BJ (cell line): ENCODE measurements at regions of chr9 and their contacts with region 1.

Region 1: GRCh38 chr9:36328798-36329411 is 70.7 kb upstream of the GNE start:
- DNase-seq: peak; percentile 12
- H3K4me3 ChIP-seq: no peak overlapping the region
- H3K27me3 ChIP-seq: no peaks in the 10 kb centered on the region
- CTCF ChIP-seq: peak; percentile 73

Region 2: DNA sequence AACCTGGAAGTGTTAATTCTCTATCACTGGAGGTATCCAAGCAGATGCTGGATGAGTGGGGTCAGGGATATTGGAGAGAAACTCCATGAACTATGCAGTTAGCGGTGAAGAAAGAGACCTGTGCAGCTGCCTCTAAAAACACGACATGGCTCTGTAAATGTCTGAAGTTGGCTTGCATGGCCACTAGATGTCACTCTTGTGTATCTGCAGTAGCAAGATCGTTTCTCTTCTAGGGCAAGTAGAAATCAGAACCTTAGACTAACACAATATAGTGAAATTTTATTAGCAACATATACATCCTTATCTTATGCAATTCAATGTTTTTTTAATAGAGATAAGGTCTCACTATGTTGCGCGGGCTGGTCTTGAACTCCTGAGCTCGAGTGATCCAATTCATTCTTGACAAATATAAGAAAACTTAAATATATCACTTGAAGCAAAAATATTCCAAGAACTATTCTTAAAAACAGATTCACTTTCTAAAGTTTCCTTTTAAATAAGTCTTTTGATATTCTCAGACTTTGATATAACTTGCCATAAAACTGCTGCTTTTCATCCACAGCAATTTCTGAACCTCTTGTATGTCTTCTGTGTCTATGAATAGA is 373.9 kb before region 1 on chr9:
- CTCF ChIA-PET with region 1: interaction called, 8 read pairs
- POLR2A ChIA-PET with region 1: interaction called, 14 read pairs
- DNase-seq: no peak
- H3K4me3 ChIP-seq: no peak overlapping the region
- H3K27me3 ChIP-seq: no peaks in the 10 kb centered on the region
- CTCF ChIP-seq: peak; percentile 88

Region 3: GRCh38 chr9:36190388-36191287 is 138.3 kb before region 1 on chr9 and contains the start of gene CLTA:
- CTCF ChIA-PET with region 1: interaction called, 20 read pairs
- POLR2A ChIA-PET with region 1: no interaction called
- DNase-seq: peak; percentile 94
- H3K4me3 ChIP-seq: peak within 1 kb of the TSS; percentile 76
- H3K27me3 ChIP-seq: no peaks in the 10 kb centered on the region
- CTCF ChIP-seq: peak; percentile 66
- polyA plus RNA-seq, gene CLTA: 197 and 212 TPM in 2 replicates

Region 4: GRCh38 chr9:36250079-36250478 is 78.8 kb before region 1 on chr9:
- CTCF ChIA-PET with region 1: interaction called, 94 read pairs
- POLR2A ChIA-PET with region 1: interaction called, 3 read pairs
- DNase-seq: no peak
- H3K4me3 ChIP-seq: no peak overlapping the region
- H3K27me3 ChIP-seq: no peaks in the 10 kb centered on the region
- CTCF ChIP-seq: no peak

Region 5: DNA sequence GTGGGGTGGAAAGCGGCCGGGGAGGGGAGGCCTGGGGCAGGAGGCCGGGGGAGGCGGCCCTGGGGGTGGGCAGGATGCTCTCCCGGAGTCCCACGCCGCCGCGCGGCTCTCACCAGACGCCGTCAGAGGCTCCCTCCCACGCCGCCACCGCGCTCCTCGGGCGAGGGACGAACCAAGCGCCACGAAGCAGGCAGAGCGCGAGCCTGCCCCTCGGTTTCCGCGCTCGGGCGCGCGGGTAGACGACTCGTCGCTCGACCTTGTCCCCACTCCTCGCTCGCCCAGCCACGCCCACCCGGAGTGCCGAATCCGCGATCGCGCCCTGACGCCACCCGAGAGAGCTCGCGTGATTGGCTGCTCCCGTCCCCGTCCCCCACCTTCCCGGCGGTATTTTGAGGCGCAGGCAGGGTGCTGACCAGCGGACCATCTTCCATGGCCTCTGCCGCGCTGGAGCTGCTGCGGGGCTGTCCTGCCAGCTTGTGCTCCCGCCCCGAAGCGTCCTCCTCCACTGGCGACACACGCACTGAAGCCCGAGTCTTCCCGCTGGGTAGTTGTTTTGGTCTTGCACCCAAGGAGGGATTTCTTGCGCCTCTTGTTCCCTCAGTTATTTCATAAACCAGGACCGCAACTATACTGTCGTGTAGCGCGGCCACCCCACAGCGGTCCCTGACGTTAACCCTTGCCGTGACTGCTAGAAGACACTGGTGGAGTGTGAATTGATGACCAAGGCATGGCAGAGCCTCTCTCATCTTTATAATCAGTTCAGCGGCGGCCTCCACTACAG is 70.5 kb before region 1 on chr9 and contains the start of gene GNE:
- CTCF ChIA-PET with region 1: interaction called, 94 read pairs
- POLR2A ChIA-PET with region 1: no interaction called
- DNase-seq: peak; percentile 67
- H3K4me3 ChIP-seq: peak within 1 kb of the TSS; percentile 73
- H3K27me3 ChIP-seq: no peaks in the 10 kb centered on the region
- CTCF ChIP-seq: no peak
- polyA plus RNA-seq, gene GNE: 14.7 and 16.7 TPM in 2 replicates

Region 6: DNA sequence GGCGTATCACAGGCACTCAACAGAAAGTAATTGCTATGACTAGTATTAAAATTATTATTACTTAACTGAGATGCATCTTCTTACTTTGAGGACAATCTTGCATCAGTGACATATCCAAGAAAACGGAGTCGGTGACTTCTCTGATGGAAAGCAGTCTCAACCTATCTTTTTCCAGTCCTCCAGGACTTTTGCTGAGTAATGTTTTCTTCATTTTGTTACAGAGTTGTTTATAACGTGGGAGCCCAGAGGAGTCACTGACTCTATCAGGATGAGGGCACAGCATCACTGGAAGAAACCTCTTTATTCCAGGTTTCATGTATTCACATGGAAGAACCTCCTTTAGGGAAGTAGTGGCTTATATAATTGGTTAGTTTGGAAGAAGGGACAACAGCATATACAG is 192.2 kb after region 1 on chr9:
- CTCF ChIA-PET with region 1: no interaction called
- POLR2A ChIA-PET with region 1: no interaction called
- DNase-seq: no peak
- H3K4me3 ChIP-seq: no peak overlapping the region
- H3K27me3 ChIP-seq: no peaks in the 10 kb centered on the region
- CTCF ChIP-seq: no peak